Tibial artery (tissue), 4 donors: ENCODE measurements at regions of chr7 and their contacts with region 1.

Region 1: DNA sequence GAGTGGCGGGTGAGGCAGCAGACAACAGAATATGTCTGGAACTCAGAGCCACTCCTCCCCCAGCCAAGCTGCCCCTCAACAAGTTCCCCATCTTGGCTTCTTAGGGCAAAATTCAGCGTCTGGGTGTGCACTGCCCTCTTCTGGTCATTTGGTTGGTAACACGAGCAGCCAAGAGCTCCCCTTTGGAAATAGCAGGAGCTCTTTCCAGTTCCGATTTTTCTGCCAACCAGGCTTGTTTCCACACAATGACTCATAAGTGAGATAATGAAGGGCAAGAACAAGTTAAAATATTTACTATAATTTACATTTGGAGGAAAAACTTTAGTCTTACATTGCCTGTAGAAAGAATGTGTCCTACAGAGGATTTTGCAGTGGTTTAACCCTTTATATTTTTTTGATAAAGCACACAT is 70.5 kb downstream of the ADCYAP1R1 start:
- DNase-seq: peak; percentile 70 to 80
- H3K4me3 ChIP-seq: no peak overlapping the region
- H3K27ac ChIP-seq: no peak overlapping the region
- H3K4me1 ChIP-seq: no peaks in the 10 kb centered on the region
- H3K27me3 ChIP-seq: peaks cover 0 to 7% of the 10 kb centered on the region in 2 donors
- CTCF ChIP-seq: peak; percentile 75 to 76

Region 2: GRCh38 chr7:30983042-30983913 is 139.4 kb before region 1 on chr7:
- intact Hi-C with region 1: loop called (anchors 5 kb)
- DNase-seq: peak; percentile 77 to 88
- H3K4me3 ChIP-seq: peak overlapping the region; percentile 24 to 34
- H3K27ac ChIP-seq: peak overlapping the region in 1 of 2 donors; percentile 49
- H3K4me1 ChIP-seq: peaks cover 0 to 20% (median 9%) of the 10 kb centered on the region in 4 donors
- H3K27me3 ChIP-seq: peaks cover 0 to 16% of the 10 kb centered on the region in 2 donors
- CTCF ChIP-seq: peak; percentile 81 to 96